Right ventricle myocardium inferior (tissue), 1 donor: ENCODE measurements at regions of chr12 and their contacts with region 1.

Region 1: DNA sequence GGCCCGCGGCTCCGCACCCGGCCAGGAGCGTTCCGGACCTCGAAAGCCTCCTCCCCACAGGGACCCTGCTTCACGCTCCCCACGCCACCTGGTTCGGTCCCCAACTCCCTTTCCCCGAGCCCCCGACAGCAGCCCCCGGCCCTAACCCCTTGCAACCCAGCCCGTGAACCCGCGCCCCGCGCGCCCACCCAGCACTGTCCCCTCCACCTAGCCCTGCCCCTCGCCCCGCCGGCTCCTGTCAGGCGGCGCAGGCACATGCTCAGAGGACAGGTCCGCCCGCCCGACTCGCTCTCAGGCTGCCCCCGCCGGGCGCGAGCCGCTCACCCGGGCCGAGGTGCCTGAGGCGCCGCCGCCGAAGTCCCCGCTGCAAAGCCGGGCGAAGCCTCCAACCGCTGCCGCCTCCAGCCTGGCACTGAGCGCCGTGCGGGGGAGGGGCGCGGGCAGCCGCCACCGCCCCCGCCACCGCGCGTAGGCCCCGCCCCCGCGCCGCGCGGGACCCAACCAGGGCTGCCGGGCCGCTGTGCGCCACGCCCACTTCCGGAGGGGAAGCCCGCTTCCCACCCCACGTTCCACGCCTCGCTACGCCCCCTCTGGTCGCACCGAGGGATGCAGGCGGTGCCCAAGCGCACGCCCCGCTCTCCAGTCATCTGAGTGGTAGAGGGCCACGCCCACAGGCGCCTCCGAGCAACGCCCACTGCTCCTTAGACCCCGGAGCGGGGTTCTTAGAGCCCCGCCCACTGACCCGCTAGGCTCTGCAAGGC is at the start of gene CORO1C:
- DNase-seq: peak; percentile 98
- ATAC-seq: peak; percentile 90
- total RNA-seq, gene CORO1C: 76.4 TPM

Region 2: GRCh38 chr12:107038660-107039170 is 1692.6 kb before region 1 on chr12:
- intact Hi-C with region 1: no loop called
- DNase-seq: no peak
- ATAC-seq: no peak

Region 3: DNA sequence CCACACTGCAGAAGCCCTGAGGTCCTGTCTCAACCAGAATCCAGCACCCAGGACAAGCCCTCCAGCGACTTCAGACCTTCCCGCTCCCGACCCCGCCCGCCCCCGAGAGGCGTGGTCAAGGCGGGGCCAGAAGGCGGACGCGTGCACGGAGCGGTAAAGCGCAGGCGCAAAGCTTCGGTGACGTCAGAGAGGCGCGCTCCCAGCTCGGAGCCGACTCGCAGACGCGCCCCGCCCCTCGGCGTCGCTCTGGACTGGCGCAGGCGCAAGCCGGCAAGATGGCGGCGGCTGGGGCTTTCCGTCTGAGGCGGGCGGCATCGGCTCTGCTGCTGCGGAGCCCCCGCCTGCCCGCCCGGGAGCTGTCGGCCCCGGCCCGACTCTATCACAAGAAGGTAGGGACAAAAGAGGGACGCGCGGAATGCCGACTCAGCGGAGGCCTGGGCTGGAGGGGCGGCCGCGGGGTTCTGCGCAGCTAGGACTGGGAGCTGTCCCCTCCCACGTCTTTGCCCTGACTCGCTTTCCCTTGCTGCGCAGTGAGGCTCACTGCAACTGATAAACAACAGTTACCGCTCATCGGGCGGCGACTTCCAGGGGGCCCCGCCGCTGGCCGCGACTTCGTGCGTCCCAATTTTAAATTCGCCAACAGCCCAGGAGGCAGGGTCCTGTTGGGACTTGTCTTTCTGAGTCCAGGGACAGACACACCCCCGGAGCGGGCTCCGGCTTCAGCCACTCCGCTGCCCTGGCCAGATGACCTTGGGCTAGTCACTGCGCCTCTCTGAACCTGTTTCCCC is 168.7 kb before region 1 on chr12 and contains the start of gene ISCU:
- intact Hi-C with region 1: loop called (anchors 2 kb)
- DNase-seq: peak; percentile 98
- ATAC-seq: peak; percentile 91
- total RNA-seq, gene ISCU: 444 TPM

Region 4: DNA sequence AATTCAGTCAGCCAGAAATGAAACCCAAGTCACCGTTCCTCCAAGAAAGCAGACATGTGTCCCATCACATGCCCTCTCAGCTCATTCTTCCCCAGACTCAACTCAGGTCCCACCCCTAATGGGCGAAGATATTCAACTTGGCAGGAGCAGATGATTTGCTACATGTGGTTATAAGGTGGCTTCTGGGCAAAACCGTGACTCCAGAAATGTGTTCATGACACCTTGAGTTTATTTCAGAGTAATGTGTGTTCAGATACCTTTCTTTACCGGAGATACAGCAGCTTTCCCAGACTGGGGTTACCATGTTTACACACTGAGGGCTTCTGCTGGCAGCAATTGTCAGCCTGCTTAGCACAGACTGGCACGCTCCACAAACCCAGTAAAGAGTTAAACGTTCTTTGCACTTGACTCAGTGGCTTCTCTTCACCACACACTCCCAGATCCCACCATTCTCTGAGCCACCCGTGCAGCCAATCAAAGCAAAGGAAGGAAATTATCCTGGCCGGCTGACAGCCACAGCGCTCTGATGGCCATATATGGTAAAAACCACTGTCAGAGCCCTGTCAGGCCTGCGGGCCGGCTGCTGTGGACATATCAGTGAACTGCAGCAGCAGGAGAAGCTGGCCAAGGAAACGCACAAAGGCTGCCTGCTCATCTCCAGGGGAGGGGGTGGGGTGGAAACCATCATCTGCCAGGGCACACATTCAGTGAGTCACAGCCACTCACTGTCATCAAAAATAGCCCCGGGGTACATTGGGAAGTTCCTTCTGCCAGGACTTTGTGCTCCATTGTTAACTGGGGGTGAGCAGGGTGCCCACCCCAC is 39.9 kb before region 1 on chr12:
- intact Hi-C with region 1: loop called (anchors 2 kb)
- DNase-seq: peak; percentile 98
- ATAC-seq: peak; percentile 95

Region 5: GRCh38 chr12:108788076-108788782 is 56.9 kb after region 1 on chr12:
- intact Hi-C with region 1: loop called (anchors 5 kb)
- DNase-seq: peak; percentile 80
- ATAC-seq: peak; percentile 76

Region 6: DNA sequence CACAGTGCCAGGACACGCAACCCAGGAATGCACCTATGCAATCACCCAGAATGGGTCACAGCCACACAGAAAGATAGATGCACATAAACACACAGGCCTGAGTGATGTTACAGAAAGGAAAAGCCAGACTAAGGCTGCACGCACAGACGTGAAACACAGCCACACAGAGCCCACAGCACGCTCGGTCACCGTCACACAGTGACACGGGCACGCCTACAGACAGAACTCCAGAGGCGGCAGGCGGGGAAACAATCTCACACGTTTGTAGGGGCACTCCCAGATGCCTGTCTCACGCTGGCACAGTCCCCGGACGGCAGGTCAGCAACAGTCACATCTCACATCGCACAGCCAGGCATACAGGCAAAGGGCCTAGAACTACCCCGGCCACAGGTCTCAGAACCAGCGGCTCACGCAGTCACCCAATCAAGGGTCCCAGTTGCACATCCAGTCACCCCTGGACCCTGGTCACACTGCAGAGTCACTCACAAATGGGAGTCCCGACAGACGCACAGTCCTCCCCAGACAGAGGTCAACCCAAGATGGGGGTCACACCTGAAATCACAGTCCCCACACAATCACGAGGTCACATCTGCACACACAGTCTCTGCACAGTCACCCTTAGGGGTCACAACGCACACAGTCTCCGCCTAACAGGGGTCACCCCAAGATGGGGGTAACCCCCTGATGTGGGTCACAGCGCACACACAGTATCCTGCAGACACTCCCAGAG is 125.3 kb after region 1 on chr12:
- intact Hi-C with region 1: loop called (anchors 2 kb)
- DNase-seq: peak; percentile 90
- ATAC-seq: peak; percentile 62